ENCODE measurements at regions of chr1 and their contacts with region 1.

Region 1: DNA sequence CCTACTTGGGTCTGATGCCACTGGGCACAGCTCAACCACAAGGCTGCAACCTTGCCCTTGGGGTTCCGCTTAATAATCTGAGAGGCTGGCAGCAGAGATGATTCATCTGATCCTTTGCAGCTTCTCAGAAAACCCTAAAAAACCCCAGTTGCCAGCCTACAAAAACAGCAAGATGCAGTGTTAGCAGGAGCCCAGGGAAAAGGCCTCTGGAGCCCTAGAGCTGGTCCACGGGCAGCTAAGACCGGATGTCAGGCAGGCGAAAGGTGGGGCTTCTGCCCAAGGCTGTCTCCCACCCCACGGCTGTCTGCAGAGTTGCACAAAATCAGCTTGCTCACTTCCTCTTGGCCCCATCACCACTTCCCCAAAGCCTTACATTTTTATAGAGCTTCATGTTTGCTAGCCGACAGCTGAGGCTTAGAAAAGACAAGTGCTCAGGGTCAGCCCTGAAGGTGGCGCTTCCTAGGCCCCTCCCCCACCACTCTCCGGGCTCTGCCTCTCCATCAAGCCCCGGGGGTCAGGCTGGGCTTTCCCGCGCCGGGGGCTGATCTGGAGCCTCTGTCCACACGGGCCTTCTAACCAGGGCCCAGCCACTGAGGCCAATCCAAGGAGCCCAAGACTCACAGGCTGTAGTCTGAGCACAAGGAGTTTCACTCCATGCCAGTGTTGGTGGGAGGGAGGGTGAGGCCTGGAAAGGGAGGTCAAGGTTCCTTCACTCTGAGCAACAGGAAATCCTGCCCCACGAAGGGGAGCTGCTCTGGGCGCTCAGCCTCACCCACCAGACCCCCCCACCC is 4.2 kb upstream of the ADORA3 start:
- DNase-seq: peak; percentile 82
- ATAC-seq: peak; percentile 79
- H3K4me3 ChIP-seq: peak overlapping the region; percentile 69
- H3K27ac ChIP-seq: peak overlapping the region; percentile 99
- H3K4me1 ChIP-seq: peaks cover 58% of the 10 kb centered on the region
- H3K27me3 ChIP-seq: no peaks in the 10 kb centered on the region
- CTCF ChIP-seq: peak in 2 of 3 experiments; percentile 15 to 32; a peak in 1 of 6 replicates
- EP300 ChIP-seq: peak in 1 of 2 experiments; percentile 73; a peak in 2 of 4 replicates
- POLR2A ChIP-seq: peak; percentile 62
- RAD21 ChIP-seq: no peak

Region 2: GRCh38 chr1:111481387-111482221 is 26.0 kb before region 1 on chr1:
- CTCF ChIA-PET with region 1: interaction called, 59 read pairs
- POLR2A ChIA-PET with region 1: interaction called, 13 read pairs
- RAD21 ChIA-PET with region 1: interaction called, 48 read pairs
- SMC1A ChIA-PET with region 1: interaction called, 128 read pairs
- in situ Hi-C with region 1: no loop called
- intact Hi-C with region 1: loop called (anchors 1 kb)
- DNase-seq: peak; percentile 48
- ATAC-seq: peak; percentile 88
- H3K4me3 ChIP-seq: no peak overlapping the region
- H3K27ac ChIP-seq: no peak overlapping the region
- H3K4me1 ChIP-seq: peaks cover 16% of the 10 kb centered on the region
- H3K27me3 ChIP-seq: no peaks in the 10 kb centered on the region
- CTCF ChIP-seq: peak; percentile 79 to 97 (median 83)
- EP300 ChIP-seq: no peak
- POLR2A ChIP-seq: no peak
- RAD21 ChIP-seq: peak; percentile 95

Region 3: GRCh38 chr1:111592389-111593361 is 85.1 kb after region 1 on chr1:
- CTCF ChIA-PET with region 1: interaction called, 86 read pairs
- POLR2A ChIA-PET with region 1: interaction called, 15 read pairs
- RAD21 ChIA-PET with region 1: interaction called, 105 read pairs
- SMC1A ChIA-PET with region 1: interaction called, 93 read pairs
- in situ Hi-C with region 1: loop called (anchors 10 kb)
- intact Hi-C with region 1: loop called (anchors 2 kb)
- DNase-seq: peak; percentile 98
- ATAC-seq: peak; percentile 92
- H3K4me3 ChIP-seq: peak overlapping the region; percentile 54
- H3K27ac ChIP-seq: peak overlapping the region; percentile 83
- H3K4me1 ChIP-seq: peaks cover 79% of the 10 kb centered on the region
- H3K27me3 ChIP-seq: no peaks in the 10 kb centered on the region
- CTCF ChIP-seq: no peak
- EP300 ChIP-seq: peak; percentile 78 to 93
- POLR2A ChIP-seq: peak; percentile 58; the same call in 1 of the 2 replicates
- RAD21 ChIP-seq: peak; percentile 39

Region 4: DNA sequence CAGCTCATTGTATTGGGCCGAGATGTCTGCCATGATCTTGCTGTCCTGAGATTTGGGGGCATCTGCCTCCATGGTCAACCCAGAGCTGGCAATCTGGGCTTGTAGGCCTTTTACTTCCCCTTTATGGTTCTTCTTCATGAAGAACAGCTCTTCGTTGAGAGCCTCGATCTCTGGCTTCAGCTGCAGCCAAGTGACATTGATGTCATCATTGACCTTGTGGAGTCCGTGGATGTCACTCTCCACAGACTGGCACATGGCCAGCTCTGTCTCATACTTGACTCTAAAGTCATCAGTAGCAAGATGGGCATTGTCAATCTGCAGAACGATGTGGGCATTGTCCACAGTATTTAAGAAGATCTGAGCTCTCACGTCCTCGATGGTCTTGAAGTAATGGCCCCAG is 141.2 kb after region 1 on chr1:
- CTCF ChIA-PET with region 1: interaction called, 8 read pairs
- POLR2A ChIA-PET with region 1: interaction called, 4 read pairs
- RAD21 ChIA-PET with region 1: interaction called, 13 read pairs
- SMC1A ChIA-PET with region 1: interaction called, 7 read pairs
- in situ Hi-C with region 1: loop called (anchors 5 kb)
- intact Hi-C with region 1: no loop called
- DNase-seq: no peak
- ATAC-seq: no peak
- H3K4me3 ChIP-seq: no peak overlapping the region
- H3K27ac ChIP-seq: no peak overlapping the region
- H3K4me1 ChIP-seq: no peaks in the 10 kb centered on the region; the same call in 1 of the 2 replicates
- H3K27me3 ChIP-seq: no peaks in the 10 kb centered on the region
- CTCF ChIP-seq: no peak
- EP300 ChIP-seq: no peak
- POLR2A ChIP-seq: no peak; the same call in 1 of the 2 replicates
- RAD21 ChIP-seq: no peak

Region 5: DNA sequence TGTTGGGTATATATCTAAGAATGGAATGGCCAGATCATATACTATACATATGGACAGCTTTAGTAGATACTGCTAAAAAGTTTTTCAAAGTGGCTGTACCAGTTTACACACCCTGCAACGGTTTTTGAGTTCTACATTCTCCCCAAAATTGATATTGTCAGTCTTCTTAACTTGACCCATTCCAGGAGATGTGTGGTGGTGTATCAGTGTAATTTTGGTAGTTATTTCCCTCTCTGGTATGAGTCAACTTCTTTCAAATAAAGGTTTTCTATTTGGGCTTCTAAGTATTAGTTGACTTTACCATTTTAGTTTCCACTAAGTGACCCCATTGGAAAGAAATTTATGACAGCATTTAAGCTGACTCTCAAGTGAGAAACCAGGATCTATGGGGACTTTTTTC is 202.4 kb after region 1 on chr1:
- CTCF ChIA-PET with region 1: interaction called, 62 read pairs
- POLR2A ChIA-PET with region 1: interaction called, 9 read pairs
- RAD21 ChIA-PET with region 1: interaction called, 60 read pairs
- SMC1A ChIA-PET with region 1: interaction called, 87 read pairs
- in situ Hi-C with region 1: no loop called
- intact Hi-C with region 1: no loop called
- DNase-seq: no peak
- ATAC-seq: no peak
- H3K4me3 ChIP-seq: no peak overlapping the region
- H3K27ac ChIP-seq: no peak overlapping the region
- H3K4me1 ChIP-seq: peaks cover 3% of the 10 kb centered on the region; the same call in 1 of the 2 replicates
- H3K27me3 ChIP-seq: no peaks in the 10 kb centered on the region
- CTCF ChIP-seq: no peak
- EP300 ChIP-seq: no peak
- POLR2A ChIP-seq: no peak
- RAD21 ChIP-seq: no peak

Region 6: GRCh38 chr1:111762332-111762731 is 254.7 kb after region 1 on chr1:
- CTCF ChIA-PET with region 1: interaction called, 62 read pairs
- POLR2A ChIA-PET with region 1: interaction called, 4 read pairs
- RAD21 ChIA-PET with region 1: interaction called, 68 read pairs
- SMC1A ChIA-PET with region 1: interaction called, 43 read pairs
- in situ Hi-C with region 1: loop called (anchors 10 kb)
- intact Hi-C with region 1: no loop called
- DNase-seq: no peak
- ATAC-seq: no peak
- H3K4me3 ChIP-seq: no peak overlapping the region
- H3K27ac ChIP-seq: no peak overlapping the region
- H3K4me1 ChIP-seq: no peaks in the 10 kb centered on the region
- H3K27me3 ChIP-seq: no peaks in the 10 kb centered on the region
- CTCF ChIP-seq: no peak
- EP300 ChIP-seq: no peak
- POLR2A ChIP-seq: no peak
- RAD21 ChIP-seq: no peak

Region 7: GRCh38 chr1:111847466-111847865 is 339.9 kb after region 1 on chr1:
- CTCF ChIA-PET with region 1: no interaction called
- POLR2A ChIA-PET with region 1: no interaction called
- RAD21 ChIA-PET with region 1: no interaction called
- SMC1A ChIA-PET with region 1: no interaction called
- in situ Hi-C with region 1: no loop called
- intact Hi-C with region 1: no loop called
- DNase-seq: no peak
- ATAC-seq: no peak
- H3K4me3 ChIP-seq: no peak overlapping the region
- H3K27ac ChIP-seq: no peak overlapping the region
- H3K4me1 ChIP-seq: no peaks in the 10 kb centered on the region
- H3K27me3 ChIP-seq: peaks cover 0 to 4% of the 10 kb centered on the region in 2 experiments; a peak in 2 of 4 replicates
- CTCF ChIP-seq: no peak
- EP300 ChIP-seq: no peak
- POLR2A ChIP-seq: no peak
- RAD21 ChIP-seq: no peak

Measured in GM12878 (cell line).